ENCODE measurements at regions of chr7 and their contacts with region 1.

Region 1: DNA sequence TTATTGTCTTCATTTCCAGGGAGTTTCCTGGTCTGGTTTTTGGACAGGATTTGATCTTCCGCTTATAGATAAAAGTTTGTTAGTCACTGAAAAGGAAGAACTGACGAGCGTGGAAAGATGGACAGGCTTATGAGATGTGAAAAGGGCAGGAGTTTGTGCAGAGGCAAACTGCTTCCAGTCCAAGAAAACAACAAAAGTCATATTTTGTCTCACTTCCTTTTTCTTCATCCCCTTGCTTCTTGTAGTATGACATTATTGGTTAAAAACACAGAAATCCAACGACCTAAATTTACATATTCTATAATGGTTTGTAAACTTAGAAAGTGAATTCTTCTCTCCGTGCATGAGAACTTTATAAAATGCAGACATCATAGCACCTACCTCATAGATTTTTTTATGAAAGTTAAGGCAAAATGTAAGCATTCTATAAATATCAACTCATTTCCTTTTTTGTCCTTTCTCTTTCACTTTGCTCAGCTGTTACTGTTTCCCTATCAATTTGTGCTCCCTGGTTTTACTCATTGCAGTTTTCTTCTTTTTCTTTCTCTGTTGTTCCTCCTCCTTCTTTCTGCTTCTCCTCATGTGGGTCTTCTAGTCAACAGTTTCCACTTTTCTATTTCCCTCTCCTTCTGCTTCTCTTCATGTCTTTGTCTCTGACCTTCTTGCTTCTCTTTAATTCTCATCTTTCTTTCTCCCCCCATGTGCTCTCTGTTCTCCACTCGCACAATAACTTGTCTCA is 370.2 kb downstream of the ARL4A start:
- DNase-seq: no peak
- ATAC-seq: no peak; the same call in 1 of the 2 replicates
- H3K4me3 ChIP-seq: no peak overlapping the region
- H3K27ac ChIP-seq: no peak overlapping the region; the same call in 1 of the 2 replicates
- H3K4me1 ChIP-seq: peaks cover 4% of the 10 kb centered on the region; the same call in 1 of the 2 replicates
- H3K27me3 ChIP-seq: no peaks in the 10 kb centered on the region
- CTCF ChIP-seq: no peak
- POLR2A ChIP-seq: no peak
- RAD21 ChIP-seq: no peak

Region 2: DNA sequence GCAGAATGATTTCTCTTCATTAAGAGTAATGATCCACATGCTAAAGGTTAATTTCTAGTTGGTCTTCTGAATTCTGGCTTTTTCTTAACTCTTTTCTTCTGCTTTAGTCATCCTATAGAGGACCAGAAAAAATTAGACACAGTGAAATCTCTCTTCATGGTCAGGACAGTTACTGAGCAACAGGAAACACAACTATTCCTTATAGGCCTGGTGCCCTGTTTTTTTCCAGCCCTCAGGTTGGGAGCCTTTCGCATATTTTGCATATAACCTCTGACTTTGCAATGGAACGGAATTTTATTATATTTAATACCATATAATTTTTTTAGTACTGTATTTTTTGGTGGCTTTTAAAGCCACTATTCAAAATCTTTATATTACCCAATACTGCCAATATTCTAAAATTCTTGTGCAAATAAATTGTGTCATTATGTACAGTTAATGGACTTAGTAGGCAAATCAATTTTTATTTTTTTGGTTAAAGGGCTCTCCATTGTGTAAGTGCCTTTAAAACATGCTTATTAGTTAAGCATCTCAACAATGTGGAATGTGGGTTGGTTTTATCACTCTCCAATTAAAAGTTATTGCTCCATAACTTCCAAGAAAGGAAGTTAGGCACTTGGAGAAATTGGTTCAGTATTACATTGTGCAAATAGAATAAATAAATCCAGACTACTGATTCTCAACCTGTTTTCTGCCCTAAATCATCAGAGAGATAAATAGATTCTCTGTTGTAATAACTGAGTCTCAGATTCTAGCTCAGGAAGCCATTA is 347.7 kb before region 1 on chr7:
- CTCF ChIA-PET with region 1: no interaction called
- POLR2A ChIA-PET with region 1: no interaction called
- dilution Hi-C with region 1: no loop called
- in situ Hi-C with region 1: no loop called
- intact Hi-C with region 1: loop called (anchors 1 kb)
- DNase-seq: peak; percentile 47
- ATAC-seq: peak; percentile 66
- H3K4me3 ChIP-seq: no peak overlapping the region
- H3K27ac ChIP-seq: no peak overlapping the region; the same call in 1 of the 2 replicates
- H3K4me1 ChIP-seq: peaks cover 8% of the 10 kb centered on the region
- H3K27me3 ChIP-seq: no peaks in the 10 kb centered on the region
- CTCF ChIP-seq: no peak
- POLR2A ChIP-seq: no peak
- RAD21 ChIP-seq: no peak

Region 3: DNA sequence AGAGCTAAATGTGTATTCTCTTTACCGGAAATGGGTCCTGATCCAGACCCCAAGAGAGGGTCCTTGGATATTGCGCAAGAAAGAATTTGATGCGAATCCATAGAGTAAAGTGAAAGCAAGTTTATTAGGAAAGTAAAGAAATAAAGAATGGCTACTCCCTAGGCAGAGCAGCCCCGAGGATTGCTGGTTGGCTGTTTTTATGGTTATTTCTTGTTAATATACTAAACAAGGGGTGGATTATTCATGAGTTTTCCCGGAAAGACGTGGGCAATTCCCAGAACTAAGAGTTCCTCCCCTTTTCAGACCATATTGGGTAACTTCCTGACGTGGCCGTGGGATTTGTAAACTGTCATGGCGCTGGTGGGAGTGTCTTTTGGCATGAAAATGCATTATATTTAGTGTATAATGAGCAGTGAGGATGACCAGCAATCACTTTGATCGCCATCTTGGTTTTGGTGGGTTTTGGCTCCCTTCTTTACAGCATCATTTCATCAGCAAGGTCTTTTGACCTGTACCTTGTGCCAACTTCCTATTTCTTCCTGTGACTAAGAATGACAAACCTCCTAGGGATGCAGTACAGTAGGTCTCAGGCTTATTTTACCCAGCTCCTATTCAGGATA is 309.8 kb before region 1 on chr7:
- CTCF ChIA-PET with region 1: no interaction called
- POLR2A ChIA-PET with region 1: no interaction called
- dilution Hi-C with region 1: no loop called
- in situ Hi-C with region 1: no loop called
- intact Hi-C with region 1: no loop called
- DNase-seq: peak; percentile 38
- ATAC-seq: no peak
- H3K4me3 ChIP-seq: no peak overlapping the region
- H3K27ac ChIP-seq: no peak overlapping the region
- H3K4me1 ChIP-seq: no peaks in the 10 kb centered on the region
- H3K27me3 ChIP-seq: no peaks in the 10 kb centered on the region
- CTCF ChIP-seq: no peak
- POLR2A ChIP-seq: no peak
- RAD21 ChIP-seq: no peak

Measured in IMR-90 (cell line).